B cell (primary cell): ENCODE measurements at regions of chr6 and their contacts with region 1.

Region 1: DNA sequence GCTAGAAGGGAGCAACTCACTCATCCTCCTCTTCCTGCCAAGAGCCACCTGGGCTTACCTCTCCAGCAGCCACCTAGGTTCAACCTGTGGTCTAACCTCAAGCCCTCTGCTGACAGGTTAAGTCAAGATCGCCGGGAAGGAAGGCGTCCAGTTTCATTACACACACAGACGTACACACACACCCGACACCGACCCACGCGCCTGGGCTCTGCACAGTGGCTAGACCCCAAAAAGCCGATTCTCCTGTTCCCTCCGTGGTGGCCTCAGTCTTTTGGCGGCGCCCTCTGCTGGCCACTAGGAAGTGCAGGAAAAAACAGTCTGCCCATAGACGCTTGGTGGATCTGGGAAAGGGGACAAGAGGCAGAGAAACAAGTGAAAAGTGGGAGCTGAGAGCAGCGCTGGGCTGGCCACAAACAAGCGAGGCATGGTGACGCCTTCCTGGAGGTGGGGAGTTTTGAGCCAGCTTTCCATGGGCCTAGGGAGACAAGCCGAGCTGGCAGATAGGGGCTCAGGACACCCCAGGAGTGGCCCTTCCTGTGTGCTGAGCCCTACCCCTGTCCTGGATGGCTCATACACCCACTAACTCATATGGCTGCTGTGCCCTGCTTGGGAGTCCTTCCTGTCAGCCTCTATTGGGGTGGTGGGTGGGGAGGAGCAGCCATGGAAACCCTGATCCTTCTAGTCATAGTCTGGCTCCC is 52.7 kb downstream of the MRPL14 start:
- DNase-seq: peak; percentile 83
- ATAC-seq: peak; percentile 36
- H3K4me3 ChIP-seq: peak overlapping the region in 1 of 5 experiments; percentile 12
- H3K4me3 Mint-ChIP-seq: peak overlapping the region; percentile 95
- H3K27ac ChIP-seq: no peak overlapping the region
- H3K27ac Mint-ChIP-seq: no peak overlapping the region
- H3K4me1 ChIP-seq: peaks cover 19 to 28% of the 10 kb centered on the region in 2 donors
- H3K4me1 Mint-ChIP-seq: peaks cover 17% of the 10 kb centered on the region
- H3K27me3 ChIP-seq: peaks cover 0 to 50% (median 17%) of the 10 kb centered on the region in 4 experiments
- H3K27me3 Mint-ChIP-seq: peaks cover 49% of the 10 kb centered on the region
- CTCF ChIP-seq: peak; percentile 86

Region 2: GRCh38 chr6:43608310-43608763 is 466.3 kb before region 1 on chr6:
- CTCF ChIA-PET with region 1: interaction called, 32 read pairs
- POLR2A ChIA-PET with region 1: no interaction called
- intact Hi-C with region 1: loop called (anchors 1 kb)
- DNase-seq: peak; percentile 70
- ATAC-seq: peak; percentile 49
- H3K4me3 ChIP-seq: no peak overlapping the region
- H3K4me3 Mint-ChIP-seq: no peak overlapping the region
- H3K27ac ChIP-seq: peak overlapping the region in 1 of 2 donors; percentile 55
- H3K27ac Mint-ChIP-seq: no peak overlapping the region
- H3K4me1 ChIP-seq: peaks cover 10 to 11% of the 10 kb centered on the region in 2 donors
- H3K4me1 Mint-ChIP-seq: peaks cover 12% of the 10 kb centered on the region
- H3K27me3 ChIP-seq: no peaks in the 10 kb centered on the region
- H3K27me3 Mint-ChIP-seq: no peaks in the 10 kb centered on the region
- CTCF ChIP-seq: peak; percentile 86

Region 3: GRCh38 chr6:43723737-43724295 is 350.8 kb before region 1 on chr6:
- CTCF ChIA-PET with region 1: interaction called, 128 read pairs
- POLR2A ChIA-PET with region 1: no interaction called
- intact Hi-C with region 1: loop called (anchors 1 kb)
- DNase-seq: peak; percentile 82
- ATAC-seq: peak; percentile 75
- H3K4me3 ChIP-seq: no peak overlapping the region
- H3K4me3 Mint-ChIP-seq: no peak overlapping the region
- H3K27ac ChIP-seq: no peak overlapping the region
- H3K27ac Mint-ChIP-seq: peak overlapping the region; percentile 16
- H3K4me1 ChIP-seq: peaks cover 20 to 24% of the 10 kb centered on the region in 2 donors
- H3K4me1 Mint-ChIP-seq: peaks cover 27% of the 10 kb centered on the region
- H3K27me3 ChIP-seq: no peaks in the 10 kb centered on the region
- H3K27me3 Mint-ChIP-seq: peaks cover 9% of the 10 kb centered on the region
- CTCF ChIP-seq: peak; percentile 77

Region 4: GRCh38 chr6:43774776-43775534 is 299.6 kb before region 1 on chr6:
- CTCF ChIA-PET with region 1: interaction called, 103 read pairs
- POLR2A ChIA-PET with region 1: no interaction called
- intact Hi-C with region 1: loop called (anchors 1 kb)
- DNase-seq: peak; percentile 78
- ATAC-seq: peak; percentile 22
- H3K4me3 ChIP-seq: no peak overlapping the region
- H3K4me3 Mint-ChIP-seq: peak overlapping the region; percentile 19
- H3K27ac ChIP-seq: no peak overlapping the region
- H3K27ac Mint-ChIP-seq: no peak overlapping the region
- H3K4me1 ChIP-seq: peaks cover 21 to 31% of the 10 kb centered on the region in 2 donors
- H3K4me1 Mint-ChIP-seq: peaks cover 35% of the 10 kb centered on the region
- H3K27me3 ChIP-seq: peaks cover 0 to 36% (median 15%) of the 10 kb centered on the region in 4 experiments
- H3K27me3 Mint-ChIP-seq: peaks cover 19% of the 10 kb centered on the region
- CTCF ChIP-seq: peak; percentile 84

Region 5: GRCh38 chr6:44090465-44090864 is 15.9 kb after region 1 on chr6:
- CTCF ChIA-PET with region 1: interaction called, 18 read pairs
- POLR2A ChIA-PET with region 1: no interaction called
- intact Hi-C with region 1: no loop called
- DNase-seq: no peak
- ATAC-seq: no peak
- H3K4me3 ChIP-seq: no peak overlapping the region
- H3K4me3 Mint-ChIP-seq: no peak overlapping the region
- H3K27ac ChIP-seq: no peak overlapping the region
- H3K27ac Mint-ChIP-seq: no peak overlapping the region
- H3K4me1 ChIP-seq: no peaks in the 10 kb centered on the region
- H3K4me1 Mint-ChIP-seq: no peaks in the 10 kb centered on the region
- H3K27me3 ChIP-seq: no peaks in the 10 kb centered on the region
- H3K27me3 Mint-ChIP-seq: no peaks in the 10 kb centered on the region
- CTCF ChIP-seq: no peak

Region 6: DNA sequence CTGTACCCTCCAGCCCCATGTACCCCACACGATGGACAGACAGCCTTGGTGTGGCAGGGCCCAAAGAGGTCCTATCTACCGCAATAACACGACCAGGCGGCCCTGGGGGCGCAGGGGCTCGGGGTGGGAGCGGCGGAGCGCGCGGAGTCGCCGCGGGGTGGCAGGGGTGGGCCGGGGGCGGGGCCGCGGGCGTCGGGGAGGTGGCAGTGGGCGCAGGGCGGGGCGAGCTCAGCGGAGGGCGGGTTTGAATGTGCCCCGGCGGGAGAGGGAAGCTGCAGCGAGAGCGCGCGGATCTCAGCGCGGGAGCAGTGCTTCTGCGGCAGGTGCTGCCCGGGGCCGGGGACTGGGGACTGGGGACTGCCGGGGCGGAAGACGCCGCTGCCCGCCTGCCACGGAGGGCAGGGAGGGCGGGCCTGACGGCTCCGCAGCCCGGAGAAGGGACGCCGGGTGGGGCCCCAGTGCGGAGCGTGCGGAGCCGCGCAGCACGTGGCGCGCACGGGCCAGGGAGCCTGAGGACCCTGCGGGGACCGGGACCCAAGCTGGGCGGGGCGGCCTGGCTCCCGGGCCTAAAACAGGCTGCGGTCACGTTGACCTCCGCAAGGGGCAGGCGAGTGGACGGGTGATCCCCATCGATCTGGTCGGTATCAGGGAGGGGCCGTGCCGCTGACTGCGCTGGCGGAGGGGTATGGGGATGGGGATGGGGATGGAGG is 148.9 kb after region 1 on chr6 and contains the start of gene SLC29A1:
- CTCF ChIA-PET with region 1: no interaction called
- POLR2A ChIA-PET with region 1: no interaction called
- intact Hi-C with region 1: no loop called
- DNase-seq: peak; percentile 88
- ATAC-seq: peak; percentile 83
- H3K4me3 ChIP-seq: peak within 1 kb of the TSS; percentile 36 to 68 (median 58)
- H3K4me3 Mint-ChIP-seq: peak within 1 kb of the TSS; percentile 88
- H3K27ac ChIP-seq: no peak within 1 kb of the TSS
- H3K27ac Mint-ChIP-seq: peak within 1 kb of the TSS; percentile 61
- H3K4me1 ChIP-seq: peaks cover 23 to 41% of the 10 kb centered on the region in 2 donors
- H3K4me1 Mint-ChIP-seq: peaks cover 36% of the 10 kb centered on the region
- H3K27me3 ChIP-seq: peaks cover 0 to 2% (median 0%) of the 10 kb centered on the region in 4 experiments
- H3K27me3 Mint-ChIP-seq: no peaks in the 10 kb centered on the region
- CTCF ChIP-seq: no peak
- total RNA-seq, gene SLC29A1: 7.3 and 7.6 TPM in 2 replicates